SK-N-SH (cell line): ENCODE measurements at regions of chr12 and their contacts with region 1.

Region 1: DNA sequence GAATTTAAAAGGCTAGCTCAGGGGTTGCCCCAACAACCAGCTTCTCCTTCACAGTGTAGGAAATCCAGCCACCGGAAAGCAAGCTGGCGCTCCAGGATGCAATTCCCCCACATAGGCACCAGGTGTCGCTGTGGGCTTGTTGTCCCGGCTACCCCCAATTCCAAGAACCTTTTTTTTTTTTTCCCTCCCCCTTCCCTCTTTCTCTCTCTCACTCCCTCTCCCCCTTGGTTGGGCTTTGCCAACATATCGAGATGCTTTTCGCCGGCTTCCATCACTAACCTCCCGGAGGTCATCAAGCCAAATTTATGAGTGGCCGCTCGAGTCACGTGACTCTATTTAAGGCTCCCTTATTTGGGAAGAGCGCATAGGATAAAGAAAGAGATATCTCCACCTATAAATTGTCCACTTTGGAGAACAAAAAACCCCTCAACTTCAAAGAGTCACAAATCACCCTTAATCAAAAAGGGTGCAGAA is at the start of gene HOXC5:
- DNase-seq: peak; percentile 93
- H3K4me3 ChIP-seq: peak within 1 kb of the TSS; percentile 52 to 60
- H3K27ac ChIP-seq: peak within 1 kb of the TSS in 1 of 2 experiments; percentile 93; a peak in 3 of 4 replicates
- H3K4me1 ChIP-seq: peaks cover 0 to 41% of the 10 kb centered on the region in 2 experiments; a peak in 1 of 4 replicates
- H3K27me3 ChIP-seq: no peaks in the 10 kb centered on the region
- CTCF ChIP-seq: peak; percentile 94
- EP300 ChIP-seq: 0 out of 4 replicates have a peak, but pooled peaks of 1 of the 2 experiments have one; percentile 32
- RAD21 ChIP-seq: peak; percentile 99
- polyA plus RNA-seq, gene HOXC5: 1.5 and 2.1 TPM in 2 replicates

Region 2: DNA sequence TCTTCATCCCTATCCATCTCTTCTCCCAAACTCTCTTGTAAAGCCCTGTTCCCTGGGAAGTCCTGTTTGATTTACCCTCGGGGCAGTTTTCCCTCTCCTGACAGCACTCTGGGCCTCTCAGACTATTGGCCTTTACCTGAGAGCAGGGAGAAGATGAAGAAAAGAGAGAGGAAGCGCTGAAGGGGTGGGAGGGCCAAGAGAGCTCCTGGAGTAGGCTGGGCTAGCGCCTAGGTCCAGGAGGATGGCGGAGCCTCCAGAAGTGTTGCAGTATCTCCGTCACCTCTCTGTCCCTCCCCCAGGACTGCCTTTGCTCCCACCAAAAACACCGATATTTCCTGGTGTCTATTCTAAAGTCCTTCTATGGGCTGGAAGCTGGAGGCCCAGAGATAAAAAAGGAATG is 940.9 kb before region 1 on chr12:
- CTCF ChIA-PET with region 1: no interaction called
- POLR2A ChIA-PET with region 1: no interaction called
- DNase-seq: no peak
- H3K4me3 ChIP-seq: no peak overlapping the region
- H3K27ac ChIP-seq: no peak overlapping the region
- H3K4me1 ChIP-seq: peaks cover 6% of the 10 kb centered on the region in 2 experiments; a peak in 2 of 4 replicates
- H3K27me3 ChIP-seq: no peaks in the 10 kb centered on the region
- CTCF ChIP-seq: no peak
- EP300 ChIP-seq: no peak
- RAD21 ChIP-seq: no peak

Region 3: DNA sequence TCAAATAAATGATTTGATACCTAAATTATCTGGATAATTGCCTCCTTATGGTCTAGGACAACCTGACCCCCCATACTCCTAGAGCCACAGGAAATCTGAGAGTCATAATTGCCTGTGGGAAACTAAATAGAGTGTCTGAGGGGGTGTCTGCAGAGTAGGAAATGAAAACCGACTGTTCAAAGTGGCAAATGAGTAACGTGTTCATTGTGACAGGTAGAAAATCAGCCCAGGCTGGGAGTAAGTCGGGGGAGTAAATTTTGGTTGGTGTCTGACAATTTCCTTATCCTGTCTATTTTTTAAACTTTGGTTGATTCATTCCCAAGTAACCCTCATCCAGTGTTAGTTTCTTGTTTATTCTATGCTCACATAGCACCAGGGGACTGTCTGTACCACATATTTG is 145.7 kb before region 1 on chr12:
- CTCF ChIA-PET with region 1: no interaction called
- POLR2A ChIA-PET with region 1: no interaction called
- DNase-seq: no peak
- H3K4me3 ChIP-seq: no peak overlapping the region
- H3K27ac ChIP-seq: no peak overlapping the region
- H3K4me1 ChIP-seq: no peaks in the 10 kb centered on the region
- H3K27me3 ChIP-seq: peaks cover 12% of the 10 kb centered on the region; the same call in 1 of the 2 replicates
- CTCF ChIP-seq: no peak
- EP300 ChIP-seq: no peak
- RAD21 ChIP-seq: no peak

Region 4: DNA sequence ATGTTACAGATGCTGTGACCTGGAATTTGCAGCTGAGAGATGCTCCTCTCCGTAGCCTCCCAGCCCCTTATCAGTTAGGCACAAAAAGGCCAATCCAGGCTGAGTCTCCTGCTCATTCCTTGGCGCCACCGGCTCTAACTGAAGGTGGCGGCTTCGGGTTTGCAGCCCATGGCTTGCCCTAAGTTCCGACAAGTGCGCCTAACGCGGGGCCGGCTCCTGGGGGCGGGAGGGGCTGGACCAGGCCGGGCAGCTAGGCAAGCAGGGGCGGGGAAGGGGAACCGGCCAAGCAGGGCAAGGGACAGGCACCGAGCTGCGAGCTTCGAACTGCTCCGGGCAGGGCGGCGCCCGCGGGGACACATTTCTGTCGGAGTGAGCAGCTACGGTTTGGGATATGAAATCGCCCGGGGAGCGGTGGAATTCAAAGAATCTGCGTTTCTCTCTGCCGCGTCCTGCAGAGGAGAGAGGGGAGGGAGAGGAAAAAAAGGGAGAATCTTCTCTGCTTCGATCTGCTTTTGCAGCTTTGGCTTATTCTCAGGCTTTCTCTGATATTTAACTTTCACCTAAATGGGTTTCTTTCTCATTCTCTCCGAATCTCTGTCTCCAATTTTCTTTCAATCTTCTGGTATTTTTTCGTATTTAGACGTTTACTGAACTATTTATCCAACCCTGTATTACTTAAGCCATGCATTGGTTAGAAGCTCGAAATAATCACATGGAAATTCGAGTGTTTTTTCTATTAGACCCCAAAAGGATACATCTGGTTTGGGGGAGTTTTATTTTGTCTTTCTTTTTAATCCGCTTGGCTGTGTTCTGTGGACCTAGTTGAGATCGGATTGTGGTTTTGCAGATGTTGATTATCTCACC is 79.6 kb before region 1 on chr12:
- CTCF ChIA-PET with region 1: no interaction called
- POLR2A ChIA-PET with region 1: no interaction called
- DNase-seq: no peak
- H3K4me3 ChIP-seq: no peak overlapping the region
- H3K27ac ChIP-seq: no peak overlapping the region
- H3K4me1 ChIP-seq: no peaks in the 10 kb centered on the region; a peak in 1 of 4 replicates
- H3K27me3 ChIP-seq: peaks cover 100% of the 10 kb centered on the region
- CTCF ChIP-seq: no peak
- EP300 ChIP-seq: no peak
- RAD21 ChIP-seq: no peak

Region 5: GRCh38 chr12:53999559-54000104 is 33.0 kb before region 1 on chr12:
- CTCF ChIA-PET with region 1: interaction called, 107 read pairs
- POLR2A ChIA-PET with region 1: no interaction called
- DNase-seq: peak; percentile 88
- H3K4me3 ChIP-seq: peak overlapping the region; percentile 76 to 80
- H3K27ac ChIP-seq: peak overlapping the region in 1 of 2 experiments; percentile 78; a peak in 2 of 4 replicates
- H3K4me1 ChIP-seq: peaks cover 0 to 19% of the 10 kb centered on the region in 2 experiments; a peak in 2 of 4 replicates
- H3K27me3 ChIP-seq: peaks cover 29% of the 10 kb centered on the region
- CTCF ChIP-seq: no peak
- EP300 ChIP-seq: no peak
- RAD21 ChIP-seq: no peak

Region 6: GRCh38 chr12:54017878-54018467 is 14.7 kb before region 1 on chr12:
- CTCF ChIA-PET with region 1: interaction called, 42 read pairs
- POLR2A ChIA-PET with region 1: interaction called, 3 read pairs
- DNase-seq: peak; percentile 99
- H3K4me3 ChIP-seq: peak overlapping the region; percentile 69 to 85
- H3K27ac ChIP-seq: peak overlapping the region; percentile 89 to 99
- H3K4me1 ChIP-seq: peaks cover 7 to 36% of the 10 kb centered on the region in 2 experiments; a peak in 2 of 4 replicates
- H3K27me3 ChIP-seq: no peaks in the 10 kb centered on the region
- CTCF ChIP-seq: no peak
- EP300 ChIP-seq: peak in 1 of 2 experiments; percentile 30; a peak in 1 of 4 replicates
- RAD21 ChIP-seq: no peak

Region 7: GRCh38 chr12:54060174-54060974 is 27.7 kb after region 1 on chr12:
- CTCF ChIA-PET with region 1: interaction called, 45 read pairs
- POLR2A ChIA-PET with region 1: no interaction called
- DNase-seq: no peak
- H3K4me3 ChIP-seq: no peak overlapping the region
- H3K27ac ChIP-seq: no peak overlapping the region
- H3K4me1 ChIP-seq: peaks cover 4 to 28% of the 10 kb centered on the region in 2 experiments; a peak in 2 of 4 replicates
- H3K27me3 ChIP-seq: no peaks in the 10 kb centered on the region
- CTCF ChIP-seq: no peak
- EP300 ChIP-seq: no peak
- RAD21 ChIP-seq: no peak

Region 8: GRCh38 chr12:54173066-54173726 is 140.5 kb after region 1 on chr12:
- CTCF ChIA-PET with region 1: interaction called, 10 read pairs
- POLR2A ChIA-PET with region 1: interaction called, 3 read pairs
- DNase-seq: peak; percentile 85
- H3K4me3 ChIP-seq: peak overlapping the region; percentile 40 to 53
- H3K27ac ChIP-seq: peak overlapping the region in 1 of 2 experiments; percentile 30; a peak in 1 of 4 replicates
- H3K4me1 ChIP-seq: peaks cover 3 to 23% of the 10 kb centered on the region in 2 experiments; a peak in 1 of 4 replicates
- H3K27me3 ChIP-seq: no peaks in the 10 kb centered on the region
- CTCF ChIP-seq: no peak
- EP300 ChIP-seq: no peak
- RAD21 ChIP-seq: no peak

Region 9: DNA sequence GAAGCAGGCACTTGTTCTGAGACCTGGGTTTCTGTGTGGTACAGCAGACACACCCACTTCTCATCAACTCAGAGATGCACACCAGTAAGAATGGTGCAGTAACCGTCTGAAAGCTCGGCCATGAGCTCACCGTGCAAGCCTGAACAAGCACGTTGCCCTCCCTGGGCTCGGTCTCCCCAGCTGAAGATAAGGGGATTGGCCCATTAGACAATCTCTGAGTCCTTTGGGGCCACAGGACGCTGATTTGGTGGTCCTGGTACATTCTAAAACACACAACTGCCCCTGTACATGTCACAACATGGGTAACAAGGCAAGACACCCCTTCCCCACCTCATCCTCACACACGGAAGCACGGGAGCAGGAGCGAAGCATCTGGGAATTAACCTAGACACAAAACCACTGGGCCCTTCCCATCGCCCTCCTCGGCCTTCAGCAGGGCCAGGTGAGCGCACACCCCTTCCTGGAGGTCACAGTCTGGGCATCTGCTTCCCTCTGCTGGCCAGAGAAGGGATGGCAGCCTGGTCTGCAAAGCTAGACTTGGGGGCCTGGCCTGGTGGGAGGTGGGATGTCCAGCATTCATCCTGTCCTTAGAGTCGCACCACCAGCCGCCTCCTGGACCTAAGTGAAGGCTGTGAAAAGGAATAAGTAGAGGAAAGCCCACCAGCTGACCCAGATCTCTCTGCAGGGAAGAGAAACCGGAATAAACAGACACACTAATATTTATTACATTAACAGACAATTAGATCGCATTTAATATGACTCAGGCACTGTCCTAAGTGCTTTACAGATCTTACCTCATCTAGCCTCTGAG is 175.0 kb after region 1 on chr12:
- CTCF ChIA-PET with region 1: interaction called, 548 read pairs
- POLR2A ChIA-PET with region 1: no interaction called
- DNase-seq: peak; percentile 81
- H3K4me3 ChIP-seq: no peak overlapping the region
- H3K27ac ChIP-seq: no peak overlapping the region; a peak in 1 of 4 replicates
- H3K4me1 ChIP-seq: peaks cover 0 to 15% of the 10 kb centered on the region in 2 experiments; a peak in 1 of 4 replicates
- H3K27me3 ChIP-seq: peaks cover 16% of the 10 kb centered on the region; the same call in 1 of the 2 replicates
- CTCF ChIP-seq: peak; percentile 90
- EP300 ChIP-seq: no peak
- RAD21 ChIP-seq: peak; percentile 86